ENCODE measurements at regions of chr22 and their contacts with region 1.

Region 1: DNA sequence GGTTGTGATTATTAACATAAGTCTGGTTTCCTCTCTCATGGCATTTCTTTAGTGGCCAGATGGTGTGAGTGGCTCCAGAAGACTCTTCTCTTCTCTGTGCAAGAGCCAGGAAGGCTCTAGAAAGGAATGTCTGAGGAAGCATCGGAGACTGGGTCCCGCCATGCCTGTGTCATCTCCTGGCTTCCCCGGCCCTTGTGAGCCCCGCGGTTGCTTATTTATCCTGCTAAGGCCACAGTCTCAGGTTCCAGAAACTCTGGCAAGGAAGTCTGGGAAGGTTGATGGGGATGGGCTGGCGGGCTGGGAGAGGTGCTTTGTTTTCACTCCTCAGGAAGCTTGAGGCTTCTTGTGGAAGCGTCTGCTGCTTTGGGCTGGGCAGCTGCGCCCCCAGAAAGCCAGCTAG is 18.9 kb downstream of the BCR start:
- DNase-seq: no peak
- ATAC-seq: no peak
- H3K4me3 Mint-ChIP-seq: no peak overlapping the region
- H3K27ac Mint-ChIP-seq: no peak overlapping the region
- H3K4me1 Mint-ChIP-seq: peaks cover 34% of the 10 kb centered on the region
- H3K27me3 Mint-ChIP-seq: no peaks in the 10 kb centered on the region

Region 2: GRCh38 chr22:23270212-23270733 is 71.1 kb after region 1 on chr22:
- CTCF ChIA-PET with region 1: no interaction called
- POLR2A ChIA-PET with region 1: no interaction called
- intact Hi-C with region 1: loop called in 1 of 2 experiments (anchors 5 kb)
- DNase-seq: no peak
- ATAC-seq: no peak
- H3K4me3 Mint-ChIP-seq: no peak overlapping the region
- H3K27ac Mint-ChIP-seq: no peak overlapping the region
- H3K4me1 Mint-ChIP-seq: no peaks in the 10 kb centered on the region
- H3K27me3 Mint-ChIP-seq: no peaks in the 10 kb centered on the region